ENCODE measurements at regions of chr2 and their contacts with region 1.

Region 1: DNA sequence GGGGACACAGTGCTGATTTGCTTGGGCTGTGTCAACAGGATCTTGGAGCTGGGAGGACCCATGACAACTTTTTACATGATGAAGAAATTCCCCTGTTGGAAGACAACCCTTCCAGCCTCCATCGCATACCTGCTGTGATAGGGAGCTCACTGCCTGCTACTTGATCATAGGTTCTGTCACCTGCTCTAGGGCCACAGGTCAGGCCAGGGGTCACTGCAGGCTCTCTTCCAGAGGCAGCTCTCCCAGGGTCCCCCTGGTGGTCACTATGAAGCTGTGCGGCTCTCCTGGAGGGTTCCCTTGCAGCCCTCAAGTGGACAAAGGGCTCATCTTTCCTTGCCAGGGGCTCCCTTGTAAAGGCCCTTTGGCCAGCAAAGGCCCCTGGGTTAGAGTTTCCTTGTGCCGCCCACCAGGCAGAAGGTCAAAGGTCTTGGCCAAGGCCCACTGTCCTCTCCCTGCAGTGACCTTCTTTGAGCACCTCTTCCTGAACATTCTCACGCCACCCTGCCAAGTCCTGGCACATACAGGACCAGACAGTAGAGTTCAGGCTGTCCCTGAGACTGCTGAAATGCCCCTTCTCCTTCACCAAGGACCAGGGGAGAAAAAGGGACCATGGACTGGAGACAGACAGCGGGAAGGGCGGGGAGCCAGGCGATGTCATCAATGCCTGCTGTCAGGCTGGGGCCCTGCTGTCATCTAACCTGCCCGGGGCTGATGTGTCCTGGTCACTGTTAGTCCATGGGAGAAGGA is 345.1 kb downstream of the DYSF start:
- DNase-seq: peak; percentile 59
- ATAC-seq: peak; percentile 66

Region 2: DNA sequence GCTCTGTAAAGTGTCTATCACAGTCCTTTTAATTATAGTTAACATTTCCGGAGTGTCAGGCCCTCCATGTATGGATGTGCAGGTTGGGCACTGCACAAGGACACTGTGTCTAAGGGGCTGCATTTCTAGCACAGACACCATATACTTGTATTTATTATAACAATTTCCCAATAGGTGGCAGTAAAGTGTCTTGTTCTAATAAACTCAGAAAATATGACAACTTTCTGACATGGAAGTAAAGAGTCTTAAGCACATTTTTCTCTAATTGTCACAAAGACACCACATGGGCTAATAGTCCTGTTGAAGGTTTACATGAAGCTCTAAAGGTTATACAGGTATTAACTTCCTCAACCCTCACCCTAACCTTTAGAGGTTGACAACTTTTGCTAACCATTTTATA is 188.5 kb before region 1 on chr2:
- intact Hi-C with region 1: loop called (anchors 5 kb)
- DNase-seq: no peak
- ATAC-seq: no peak

Region 3: GRCh38 chr2:71700658-71701397 is 97.6 kb before region 1 on chr2:
- intact Hi-C with region 1: loop called (anchors 10 kb)
- DNase-seq: peak; percentile 90
- ATAC-seq: peak; percentile 91

Region 4: GRCh38 chr2:71995067-71995665 is 196.7 kb after region 1 on chr2:
- intact Hi-C with region 1: loop called (anchors 10 kb)
- DNase-seq: no peak
- ATAC-seq: no peak

Region 5: DNA sequence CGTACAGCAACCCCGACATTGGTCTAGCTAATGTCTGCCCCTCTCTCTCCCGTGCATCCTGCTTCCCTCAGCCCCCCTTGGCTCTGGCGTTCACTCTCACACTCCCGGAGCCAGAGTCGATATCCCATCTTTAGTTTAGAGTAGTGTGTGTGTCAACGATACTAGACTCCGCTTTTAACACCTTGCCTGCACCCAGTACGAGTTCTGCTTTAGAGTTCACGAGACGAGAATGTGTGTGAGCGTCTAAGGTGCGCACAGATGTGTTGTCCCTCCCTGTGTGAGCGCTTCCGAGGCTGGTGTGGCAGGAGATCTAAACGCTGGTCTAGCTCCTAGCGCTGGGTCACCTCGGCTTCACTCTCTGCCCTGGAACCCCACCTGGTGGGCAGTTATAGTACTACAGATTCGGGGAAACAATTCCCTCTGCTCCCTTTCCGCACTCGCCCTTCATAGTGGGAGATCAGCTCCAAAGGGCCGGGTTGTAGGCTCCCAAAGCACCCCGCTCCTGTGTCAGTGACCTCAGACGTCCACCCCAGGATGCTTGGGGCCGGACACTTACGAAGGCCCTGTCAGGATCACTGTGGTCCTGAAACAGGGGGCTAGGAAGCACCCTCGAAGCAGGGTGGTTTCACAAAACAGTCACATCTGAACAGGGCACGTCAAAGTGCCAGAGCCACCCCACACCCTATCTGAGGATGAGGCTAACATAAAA is 351.9 kb after region 1 on chr2:
- intact Hi-C with region 1: loop called (anchors 5 kb)
- DNase-seq: peak; percentile 68
- ATAC-seq: peak; percentile 81